CD4-positive, alpha-beta memory T cell (primary cell): ENCODE measurements at regions of chr11 and their contacts with region 1.

Region 1: DNA sequence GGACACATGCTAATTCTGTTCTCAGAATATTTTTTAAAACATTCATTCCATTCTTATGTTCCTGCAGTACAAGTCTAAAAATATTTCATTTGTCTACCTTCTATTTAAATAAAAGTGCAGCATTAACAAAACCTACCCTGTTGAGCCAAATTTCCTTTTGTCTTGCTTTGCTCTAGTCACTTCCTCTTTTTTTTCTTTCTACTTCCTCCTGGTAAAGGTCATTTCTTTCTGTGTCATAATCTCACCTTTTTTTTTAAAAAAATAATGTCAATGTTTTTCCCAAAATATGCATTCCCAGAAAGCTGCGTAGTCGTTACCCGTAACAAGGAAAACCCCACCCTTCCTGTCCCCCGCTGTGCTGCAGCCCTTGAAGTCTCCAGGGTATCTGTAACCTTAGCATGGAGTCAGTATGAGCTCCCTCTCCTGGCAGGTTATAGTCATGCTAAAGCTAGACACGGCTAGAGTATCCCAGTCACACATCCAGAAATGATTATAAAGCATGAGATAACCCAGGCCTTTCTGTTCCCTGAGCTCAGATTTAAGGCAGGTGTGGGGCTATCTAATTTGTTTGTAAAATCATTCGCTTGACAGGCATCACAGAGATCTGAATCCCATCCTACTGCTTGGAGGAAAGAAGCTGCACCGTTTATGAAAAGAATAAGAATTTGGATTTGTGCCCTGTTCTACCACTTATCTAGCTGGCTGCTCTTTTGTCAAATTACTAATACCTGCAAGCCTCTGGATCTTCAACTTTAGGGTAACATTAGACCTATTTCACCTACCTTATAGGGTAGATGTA is 51.1 kb upstream of the EED start:
- DNase-seq: peak; percentile 67 to 73 (median 69)
- H3K4me3 ChIP-seq: peak overlapping the region; percentile 39 to 46
- H3K4me3 Mint-ChIP-seq: peak overlapping the region; percentile 81 to 90 (median 88)
- H3K27ac ChIP-seq: peak overlapping the region; percentile 9
- H3K27ac Mint-ChIP-seq: peak overlapping the region; percentile 53 to 88 (median 76)
- H3K4me1 ChIP-seq: peaks cover 11% of the 10 kb centered on the region
- H3K4me1 Mint-ChIP-seq: peaks cover 10 to 15% (median 13%) of the 10 kb centered on the region in 4 donors
- H3K27me3 ChIP-seq: no peaks in the 10 kb centered on the region
- H3K27me3 Mint-ChIP-seq: no peaks in the 10 kb centered on the region

Region 2: DNA sequence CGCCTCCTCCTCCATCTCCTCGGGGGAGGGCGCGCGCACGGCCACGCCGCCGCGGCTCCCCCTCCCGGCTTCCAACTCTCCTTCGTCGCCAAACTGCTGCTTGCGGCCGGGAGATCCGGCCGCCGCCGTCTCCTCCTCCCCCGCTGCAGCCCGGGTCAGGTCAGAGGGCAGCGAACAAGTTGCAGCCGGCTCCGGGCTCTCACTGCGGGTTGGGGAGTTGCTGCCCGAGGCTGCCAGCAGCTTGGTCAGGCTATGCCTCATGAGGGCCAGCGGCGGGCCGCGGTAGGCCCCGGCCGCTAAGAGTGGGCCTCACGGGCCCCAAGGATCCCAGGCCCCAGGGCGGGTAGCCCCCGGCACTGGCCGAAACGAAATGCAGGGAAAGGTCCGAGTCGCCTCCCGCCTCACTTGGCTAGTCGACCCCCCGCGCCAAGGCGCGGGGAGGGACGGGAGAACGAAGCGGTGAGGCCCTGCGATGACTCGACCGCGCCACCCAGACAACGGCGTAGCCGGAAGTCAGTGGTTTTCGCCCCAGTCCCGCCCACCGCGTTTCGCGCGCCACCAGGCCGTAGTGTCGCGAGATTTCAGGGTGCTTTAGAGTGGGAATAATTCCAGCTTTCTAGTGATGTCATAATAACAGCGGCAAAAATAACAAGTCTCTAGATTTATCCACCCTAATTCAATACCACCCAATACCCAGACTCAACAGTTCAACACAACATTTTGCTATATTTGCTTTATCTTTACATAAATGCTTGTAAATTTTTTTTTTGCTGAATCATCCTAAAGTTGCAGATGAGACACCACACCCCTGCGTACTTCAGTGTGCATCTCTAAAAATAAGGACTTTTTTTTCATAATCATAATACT is 528.6 kb before region 1 on chr11 and contains the start of gene CREBZF:
- CTCF ChIA-PET with region 1: no interaction called
- POLR2A ChIA-PET with region 1: no interaction called
- intact Hi-C with region 1: loop called (anchors 1 kb)
- DNase-seq: peak; percentile 90 to 93 (median 92)
- H3K4me3 ChIP-seq: peak within 1 kb of the TSS; percentile 45 to 87
- H3K4me3 Mint-ChIP-seq: peak within 1 kb of the TSS; percentile 98 to 100 (median 100)
- H3K27ac ChIP-seq: peak within 1 kb of the TSS; percentile 96
- H3K27ac Mint-ChIP-seq: peak within 1 kb of the TSS; percentile 99 to 100 (median 100)
- H3K4me1 ChIP-seq: peaks cover 43% of the 10 kb centered on the region
- H3K4me1 Mint-ChIP-seq: peaks cover 29 to 58% (median 36%) of the 10 kb centered on the region in 4 donors
- H3K27me3 ChIP-seq: no peaks in the 10 kb centered on the region
- H3K27me3 Mint-ChIP-seq: no peaks in the 10 kb centered on the region
- total RNA-seq, gene CREBZF: 103 to 105 TPM

Region 3: DNA sequence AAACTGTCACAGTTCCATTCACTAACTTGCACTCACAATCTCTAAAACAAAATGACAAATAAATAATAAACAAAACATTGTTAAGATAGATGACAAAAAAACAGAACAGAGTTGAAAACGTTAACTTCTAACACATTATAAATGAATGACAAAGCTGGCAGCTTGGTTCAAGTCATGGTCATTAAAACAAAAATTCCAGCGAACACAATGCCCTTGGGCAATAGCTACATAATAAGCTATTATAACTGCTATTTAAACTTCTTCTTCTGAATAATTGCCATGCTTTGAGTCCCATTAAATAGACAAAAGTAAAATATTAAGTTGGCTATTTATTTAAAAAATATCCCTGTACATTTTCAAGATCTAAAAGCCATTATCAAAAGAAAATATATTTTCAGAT is 179.3 kb before region 1 on chr11:
- CTCF ChIA-PET with region 1: interaction called, 11 read pairs
- POLR2A ChIA-PET with region 1: interaction called, 4 read pairs
- intact Hi-C with region 1: no loop called
- DNase-seq: no peak
- H3K4me3 ChIP-seq: no peak overlapping the region
- H3K4me3 Mint-ChIP-seq: no peak overlapping the region
- H3K27ac ChIP-seq: no peak overlapping the region
- H3K27ac Mint-ChIP-seq: peak overlapping the region in 2 of 7 donors; percentile 23 to 35
- H3K4me1 ChIP-seq: no peaks in the 10 kb centered on the region
- H3K4me1 Mint-ChIP-seq: peaks cover 11 to 20% (median 19%) of the 10 kb centered on the region in 4 donors
- H3K27me3 ChIP-seq: no peaks in the 10 kb centered on the region
- H3K27me3 Mint-ChIP-seq: no peaks in the 10 kb centered on the region

Region 4: DNA sequence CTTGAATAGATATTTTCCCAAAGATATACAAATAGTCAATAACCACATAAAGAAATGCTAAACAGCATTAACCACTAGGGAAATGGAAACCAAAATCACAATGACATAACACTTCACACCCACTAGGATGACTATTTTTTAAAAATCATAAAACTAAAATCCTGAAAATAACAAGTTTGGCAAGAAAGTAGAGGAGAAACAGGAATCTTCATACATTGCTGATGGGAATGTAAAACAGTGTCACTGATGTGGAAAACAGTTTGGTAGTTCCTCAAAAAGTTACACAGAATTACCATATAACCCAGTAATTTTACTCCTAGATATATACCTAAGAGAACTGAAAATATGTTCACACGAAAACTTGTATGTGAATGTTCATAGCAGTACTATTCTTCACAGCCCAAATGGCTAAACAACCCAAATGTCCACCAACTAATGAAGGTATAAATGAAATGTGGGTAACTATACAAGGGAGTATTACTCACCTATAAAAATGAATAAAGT is 137.1 kb before region 1 on chr11:
- CTCF ChIA-PET with region 1: interaction called, 13 read pairs
- POLR2A ChIA-PET with region 1: interaction called, 5 read pairs
- intact Hi-C with region 1: no loop called
- DNase-seq: no peak
- H3K4me3 ChIP-seq: no peak overlapping the region
- H3K4me3 Mint-ChIP-seq: peak overlapping the region in 5 of 8 donors; percentile 11 to 61 (median 41)
- H3K27ac ChIP-seq: no peak overlapping the region
- H3K27ac Mint-ChIP-seq: peak overlapping the region; percentile 5 to 74 (median 63)
- H3K4me1 ChIP-seq: peaks cover 97% of the 10 kb centered on the region
- H3K4me1 Mint-ChIP-seq: peaks cover 70 to 97% (median 79%) of the 10 kb centered on the region in 4 donors
- H3K27me3 ChIP-seq: no peaks in the 10 kb centered on the region
- H3K27me3 Mint-ChIP-seq: no peaks in the 10 kb centered on the region

Region 5: DNA sequence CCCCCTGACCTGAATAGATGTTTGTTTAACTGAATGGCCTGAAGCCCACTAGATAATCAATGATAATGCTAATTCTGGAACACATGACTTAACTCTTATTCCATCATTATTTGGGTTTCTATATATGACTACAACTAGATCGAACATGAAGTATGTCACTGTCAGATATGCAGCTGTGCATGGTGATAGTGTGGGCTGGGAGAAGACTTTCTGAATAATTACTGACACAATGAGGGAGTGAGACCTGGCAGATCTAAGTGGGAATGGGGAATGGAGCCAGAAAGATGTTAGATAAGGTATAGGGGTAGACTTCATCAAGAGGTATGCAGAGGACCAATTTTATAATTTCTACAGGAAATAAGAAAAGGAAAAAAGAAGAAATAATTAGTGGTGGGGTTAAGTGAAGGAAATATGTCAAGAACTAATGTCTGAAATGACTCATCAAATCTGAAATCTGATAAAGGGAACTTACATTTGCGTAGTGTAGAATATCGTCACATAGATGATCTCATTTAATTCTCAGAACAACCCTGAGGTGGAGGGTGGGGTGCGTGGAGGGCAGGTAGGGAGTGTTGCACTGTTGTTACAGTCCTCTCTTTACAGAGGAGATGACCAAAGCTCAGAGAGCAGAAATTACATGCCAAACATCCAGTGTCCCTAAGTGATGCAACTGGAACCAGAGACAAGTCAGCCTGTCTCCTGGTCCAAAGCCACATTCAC is 17.2 kb before region 1 on chr11:
- CTCF ChIA-PET with region 1: no interaction called
- POLR2A ChIA-PET with region 1: no interaction called
- intact Hi-C with region 1: loop called (anchors 1 kb)
- DNase-seq: no peak
- H3K4me3 ChIP-seq: no peak overlapping the region
- H3K4me3 Mint-ChIP-seq: no peak overlapping the region
- H3K27ac ChIP-seq: no peak overlapping the region
- H3K27ac Mint-ChIP-seq: no peak overlapping the region
- H3K4me1 ChIP-seq: no peaks in the 10 kb centered on the region
- H3K4me1 Mint-ChIP-seq: peaks cover 4 to 9% (median 5%) of the 10 kb centered on the region in 4 donors
- H3K27me3 ChIP-seq: no peaks in the 10 kb centered on the region
- H3K27me3 Mint-ChIP-seq: peaks cover 3 to 4% of the 10 kb centered on the region in 2 donors

Region 6: GRCh38 chr11:86218125-86219084 is 24.9 kb after region 1 on chr11:
- CTCF ChIA-PET with region 1: interaction called, 15 read pairs
- POLR2A ChIA-PET with region 1: interaction called, 3 read pairs
- intact Hi-C with region 1: loop called (anchors 1 kb)
- DNase-seq: peak; percentile 51 to 63 (median 55)
- H3K4me3 ChIP-seq: peak overlapping the region in 1 of 2 donors; percentile 3
- H3K4me3 Mint-ChIP-seq: peak overlapping the region; percentile 65 to 89 (median 75)
- H3K27ac ChIP-seq: no peak overlapping the region
- H3K27ac Mint-ChIP-seq: peak overlapping the region in 3 of 7 donors; percentile 24 to 72 (median 31)
- H3K4me1 ChIP-seq: peaks cover 4% of the 10 kb centered on the region
- H3K4me1 Mint-ChIP-seq: peaks cover 10 to 18% (median 11%) of the 10 kb centered on the region in 4 donors
- H3K27me3 ChIP-seq: no peaks in the 10 kb centered on the region
- H3K27me3 Mint-ChIP-seq: peaks cover 7 to 9% of the 10 kb centered on the region in 2 donors

Region 7: DNA sequence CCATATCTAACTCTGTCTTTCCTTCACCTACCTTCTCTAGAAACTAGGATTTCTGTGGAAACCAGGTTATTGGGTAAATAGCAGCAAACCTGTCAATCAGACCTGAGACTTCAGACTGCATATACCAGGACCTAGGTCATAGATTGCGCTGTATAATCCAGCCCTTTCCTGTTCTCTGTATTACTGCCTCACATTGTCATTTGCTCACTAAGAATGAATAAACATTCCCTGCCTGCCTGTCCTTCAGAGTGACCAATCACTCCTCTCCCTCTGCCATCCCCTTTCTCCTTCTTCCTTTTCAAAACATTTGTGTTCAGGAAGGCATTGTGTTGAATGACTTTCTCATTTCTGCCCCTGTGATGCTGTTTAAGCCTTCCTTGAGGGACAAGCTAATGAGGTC is 775.8 kb after region 1 on chr11:
- CTCF ChIA-PET with region 1: no interaction called
- POLR2A ChIA-PET with region 1: no interaction called
- intact Hi-C with region 1: no loop called
- DNase-seq: no peak
- H3K4me3 ChIP-seq: no peak overlapping the region
- H3K4me3 Mint-ChIP-seq: no peak overlapping the region
- H3K27ac ChIP-seq: no peak overlapping the region
- H3K27ac Mint-ChIP-seq: no peak overlapping the region
- H3K4me1 ChIP-seq: no peaks in the 10 kb centered on the region
- H3K4me1 Mint-ChIP-seq: no peaks in the 10 kb centered on the region
- H3K27me3 ChIP-seq: no peaks in the 10 kb centered on the region
- H3K27me3 Mint-ChIP-seq: peaks cover 14% of the 10 kb centered on the region in 2 donors

Region 8: DNA sequence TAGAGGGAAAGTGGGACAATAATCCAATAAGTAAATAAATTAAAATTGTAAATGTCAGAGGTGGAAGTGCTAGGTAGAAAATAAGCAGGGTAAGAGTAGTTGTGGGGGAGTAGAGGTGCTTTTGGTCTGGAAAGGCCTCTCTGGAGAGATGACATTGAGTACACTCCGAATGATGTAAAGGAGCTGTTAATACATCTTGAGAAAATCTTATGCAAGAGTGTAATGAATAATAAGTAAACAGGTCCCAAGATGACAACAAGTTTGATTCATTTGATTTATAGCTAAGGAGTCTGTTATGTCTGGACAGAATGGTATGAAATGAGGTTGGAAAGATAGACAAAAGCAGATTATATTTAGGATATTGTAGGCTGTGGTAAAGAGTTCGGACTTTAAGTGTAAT is 931.8 kb after region 1 on chr11:
- CTCF ChIA-PET with region 1: no interaction called
- POLR2A ChIA-PET with region 1: no interaction called
- intact Hi-C with region 1: no loop called
- DNase-seq: no peak
- H3K4me3 ChIP-seq: no peak overlapping the region
- H3K4me3 Mint-ChIP-seq: no peak overlapping the region
- H3K27ac ChIP-seq: no peak overlapping the region
- H3K27ac Mint-ChIP-seq: no peak overlapping the region
- H3K4me1 ChIP-seq: no peaks in the 10 kb centered on the region
- H3K4me1 Mint-ChIP-seq: peaks cover 0 to 8% (median 4%) of the 10 kb centered on the region in 4 donors
- H3K27me3 ChIP-seq: no peaks in the 10 kb centered on the region
- H3K27me3 Mint-ChIP-seq: no peaks in the 10 kb centered on the region